IMR-90 (cell line): ENCODE measurements at regions of chr20 and their contacts with region 1.

Region 1: GRCh38 chr20:32652739-32653526 is 20.8 kb downstream of the C20orf203 start:
- DNase-seq: peak; percentile 66
- ATAC-seq: peak; percentile 99
- H3K4me3 ChIP-seq: no peak overlapping the region
- H3K27ac ChIP-seq: no peak overlapping the region
- H3K4me1 ChIP-seq: no peaks in the 10 kb centered on the region
- H3K27me3 ChIP-seq: peaks cover 5% of the 10 kb centered on the region
- CTCF ChIP-seq: peak; percentile 98
- POLR2A ChIP-seq: peak; percentile 46; the same call in 1 of the 2 replicates
- RAD21 ChIP-seq: peak; percentile 99

Region 2: DNA sequence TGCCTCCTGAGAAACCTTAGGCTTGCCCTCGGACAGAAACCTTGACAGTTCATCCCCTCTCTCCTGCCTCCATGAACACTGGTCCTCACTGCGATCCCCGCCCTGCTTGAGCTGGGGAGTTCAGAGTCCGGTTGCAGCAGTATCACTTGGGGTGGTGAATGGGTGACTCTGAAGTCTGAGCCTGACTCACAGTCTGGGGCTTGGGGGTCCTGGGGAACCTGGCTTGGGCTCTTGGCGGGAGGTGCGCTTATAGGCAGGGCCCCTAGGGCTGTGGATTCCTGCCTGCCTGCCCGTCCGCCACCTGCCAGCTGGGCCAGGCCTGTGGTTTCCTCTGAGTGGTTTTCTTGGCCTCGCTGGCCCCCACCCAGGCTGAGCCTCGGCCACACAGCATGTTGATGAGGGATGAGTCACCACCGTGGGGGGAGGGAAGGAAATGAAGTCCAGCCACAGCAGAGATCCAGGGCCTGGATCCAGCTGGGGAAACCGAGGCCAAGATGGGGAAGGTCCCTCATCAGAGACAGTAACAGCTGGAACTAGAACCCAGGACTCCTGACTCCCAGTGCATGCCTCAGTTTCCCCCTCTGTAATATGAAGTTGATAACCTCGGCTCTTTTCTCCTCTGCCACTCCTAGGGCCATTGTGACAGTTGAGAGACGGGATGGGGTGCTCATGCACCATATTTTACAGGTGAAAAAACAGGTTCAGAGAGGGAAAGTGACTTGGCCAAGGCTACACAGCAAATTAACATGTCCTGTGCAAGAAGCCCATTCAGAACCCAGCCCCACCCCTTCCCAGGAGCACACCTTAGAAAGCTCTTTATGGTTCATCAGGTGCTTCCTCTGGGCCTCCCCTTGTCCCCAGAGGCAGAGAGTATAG is 816.7 kb before region 1 on chr20:
- CTCF ChIA-PET with region 1: interaction called, 4 read pairs
- POLR2A ChIA-PET with region 1: no interaction called
- dilution Hi-C with region 1: no loop called
- in situ Hi-C with region 1: loop called (anchors 25 kb)
- intact Hi-C with region 1: no loop called
- DNase-seq: peak; percentile 92
- ATAC-seq: peak; percentile 88
- H3K4me3 ChIP-seq: no peak overlapping the region
- H3K27ac ChIP-seq: no peak overlapping the region
- H3K4me1 ChIP-seq: peaks cover 15% of the 10 kb centered on the region
- H3K27me3 ChIP-seq: peaks cover 3% of the 10 kb centered on the region; the same call in 1 of the 2 replicates
- CTCF ChIP-seq: no peak
- POLR2A ChIP-seq: no peak
- RAD21 ChIP-seq: no peak

Region 3: DNA sequence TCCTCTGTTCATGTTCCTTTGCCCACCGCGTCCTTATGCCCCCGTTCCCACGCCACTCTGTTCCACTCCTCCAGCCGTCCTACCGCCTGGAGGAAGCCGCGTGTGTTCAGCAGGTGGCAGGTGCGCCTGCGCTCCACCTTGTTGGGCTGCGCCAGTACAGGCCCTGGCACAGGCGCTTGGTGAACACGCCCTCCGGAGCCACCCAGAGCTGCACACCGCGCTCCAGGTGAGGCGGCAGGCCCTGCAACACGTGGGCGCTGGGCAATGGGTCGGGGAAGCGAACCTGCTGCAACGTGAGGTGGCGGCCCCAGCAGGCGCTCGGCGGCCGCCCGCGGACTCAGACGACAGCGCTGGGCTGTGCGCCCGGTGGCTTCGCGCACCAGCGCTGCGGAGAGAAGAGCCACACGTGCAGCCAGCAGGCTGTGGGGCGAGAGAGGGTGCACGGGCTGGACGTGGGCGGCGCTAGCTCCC is 803.4 kb before region 1 on chr20:
- CTCF ChIA-PET with region 1: no interaction called
- POLR2A ChIA-PET with region 1: no interaction called
- dilution Hi-C with region 1: no loop called
- in situ Hi-C with region 1: loop called (anchors 25 kb)
- intact Hi-C with region 1: loop called (anchors 5 kb)
- DNase-seq: no peak
- ATAC-seq: no peak
- H3K4me3 ChIP-seq: no peak overlapping the region
- H3K27ac ChIP-seq: no peak overlapping the region
- H3K4me1 ChIP-seq: no peaks in the 10 kb centered on the region
- H3K27me3 ChIP-seq: peaks cover 60% of the 10 kb centered on the region
- CTCF ChIP-seq: no peak
- POLR2A ChIP-seq: no peak
- RAD21 ChIP-seq: no peak

Region 4: DNA sequence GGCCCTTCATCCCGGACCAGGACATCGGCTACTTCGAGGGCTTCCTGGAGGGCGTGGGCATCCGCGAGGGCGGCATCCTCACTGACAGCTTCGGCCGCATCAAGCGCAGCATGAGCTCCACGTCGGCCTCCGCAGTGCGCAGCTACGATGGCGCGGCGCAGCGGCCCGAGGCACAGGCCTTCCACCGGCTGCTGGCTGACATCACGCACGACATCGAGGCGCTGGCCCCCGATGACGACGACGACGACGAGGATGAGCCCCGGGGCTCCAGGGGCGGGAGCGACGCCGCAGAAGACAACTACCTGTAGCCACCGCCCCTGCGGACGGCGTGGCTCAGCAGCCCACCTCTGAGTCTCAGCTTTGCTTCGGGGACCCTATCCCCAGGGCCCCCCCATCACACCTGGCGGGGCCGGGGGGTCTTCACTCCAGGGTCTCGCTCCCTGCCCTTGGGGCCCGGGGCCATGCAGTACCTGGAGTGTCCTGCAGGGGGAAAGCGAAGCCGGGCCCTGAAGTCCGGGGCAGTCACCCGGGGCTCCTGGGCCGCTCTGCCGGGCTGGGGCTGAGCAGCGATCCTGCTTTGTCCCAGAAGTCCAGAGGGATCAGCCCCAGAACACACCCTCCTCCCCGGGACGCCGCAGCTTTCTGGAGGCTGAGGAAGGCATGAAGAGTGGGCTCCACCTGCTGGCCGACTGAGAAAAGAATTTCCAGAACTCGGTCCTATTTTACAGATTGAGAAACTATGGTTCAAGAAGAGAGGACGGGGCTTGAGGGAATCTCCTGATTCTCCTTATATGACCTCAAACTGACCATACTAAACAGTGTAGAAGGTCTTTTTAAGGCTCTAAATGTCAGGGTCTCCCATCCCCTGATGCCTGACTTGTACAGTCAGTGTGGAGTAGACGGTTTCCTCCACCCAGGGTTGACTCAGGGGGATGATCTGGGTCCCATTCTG is 621.6 kb before region 1 on chr20:
- CTCF ChIA-PET with region 1: no interaction called
- POLR2A ChIA-PET with region 1: no interaction called
- dilution Hi-C with region 1: no loop called
- in situ Hi-C with region 1: no loop called
- intact Hi-C with region 1: loop called (anchors 1 kb)
- DNase-seq: peak; percentile 73
- ATAC-seq: peak; percentile 98
- H3K4me3 ChIP-seq: no peak overlapping the region
- H3K27ac ChIP-seq: no peak overlapping the region
- H3K4me1 ChIP-seq: no peaks in the 10 kb centered on the region
- H3K27me3 ChIP-seq: peaks cover 75% of the 10 kb centered on the region
- CTCF ChIP-seq: peak; percentile 73
- POLR2A ChIP-seq: no peak
- RAD21 ChIP-seq: peak; percentile 71

Region 5: GRCh38 chr20:32336918-32337347 is 316.0 kb before region 1 on chr20:
- CTCF ChIA-PET with region 1: no interaction called
- POLR2A ChIA-PET with region 1: no interaction called
- dilution Hi-C with region 1: no loop called
- in situ Hi-C with region 1: no loop called
- intact Hi-C with region 1: loop called (anchors 5 kb)
- DNase-seq: peak; percentile 54
- ATAC-seq: peak; percentile 91
- H3K4me3 ChIP-seq: no peak overlapping the region
- H3K27ac ChIP-seq: no peak overlapping the region
- H3K4me1 ChIP-seq: peaks cover 4% of the 10 kb centered on the region
- H3K27me3 ChIP-seq: no peaks in the 10 kb centered on the region
- CTCF ChIP-seq: peak; percentile 69
- POLR2A ChIP-seq: no peak
- RAD21 ChIP-seq: peak; percentile 72

Region 6: GRCh38 chr20:32516583-32517517 is 136.1 kb before region 1 on chr20:
- CTCF ChIA-PET with region 1: interaction called, 28 read pairs
- POLR2A ChIA-PET with region 1: no interaction called
- dilution Hi-C with region 1: no loop called
- in situ Hi-C with region 1: loop called (anchors 5 kb)
- intact Hi-C with region 1: loop called (anchors 1 kb)
- DNase-seq: peak; percentile 26
- ATAC-seq: peak; percentile 48
- H3K4me3 ChIP-seq: no peak overlapping the region
- H3K27ac ChIP-seq: no peak overlapping the region
- H3K4me1 ChIP-seq: peaks cover 9% of the 10 kb centered on the region; the same call in 1 of the 2 replicates
- H3K27me3 ChIP-seq: no peaks in the 10 kb centered on the region
- CTCF ChIP-seq: no peak
- POLR2A ChIP-seq: no peak
- RAD21 ChIP-seq: no peak

Region 7: GRCh38 chr20:32521780-32522525 is 131.0 kb before region 1 on chr20:
- CTCF ChIA-PET with region 1: interaction called, 28 read pairs
- POLR2A ChIA-PET with region 1: no interaction called
- dilution Hi-C with region 1: no loop called
- in situ Hi-C with region 1: loop called (anchors 5 kb)
- intact Hi-C with region 1: loop called (anchors 1 kb)
- DNase-seq: peak; percentile 49
- ATAC-seq: peak; percentile 94
- H3K4me3 ChIP-seq: no peak overlapping the region
- H3K27ac ChIP-seq: no peak overlapping the region
- H3K4me1 ChIP-seq: peaks cover 4% of the 10 kb centered on the region; the same call in 1 of the 2 replicates
- H3K27me3 ChIP-seq: peaks cover 4% of the 10 kb centered on the region; the same call in 1 of the 2 replicates
- CTCF ChIP-seq: peak; percentile 95
- POLR2A ChIP-seq: peak; percentile 58
- RAD21 ChIP-seq: peak; percentile 100

Region 8: DNA sequence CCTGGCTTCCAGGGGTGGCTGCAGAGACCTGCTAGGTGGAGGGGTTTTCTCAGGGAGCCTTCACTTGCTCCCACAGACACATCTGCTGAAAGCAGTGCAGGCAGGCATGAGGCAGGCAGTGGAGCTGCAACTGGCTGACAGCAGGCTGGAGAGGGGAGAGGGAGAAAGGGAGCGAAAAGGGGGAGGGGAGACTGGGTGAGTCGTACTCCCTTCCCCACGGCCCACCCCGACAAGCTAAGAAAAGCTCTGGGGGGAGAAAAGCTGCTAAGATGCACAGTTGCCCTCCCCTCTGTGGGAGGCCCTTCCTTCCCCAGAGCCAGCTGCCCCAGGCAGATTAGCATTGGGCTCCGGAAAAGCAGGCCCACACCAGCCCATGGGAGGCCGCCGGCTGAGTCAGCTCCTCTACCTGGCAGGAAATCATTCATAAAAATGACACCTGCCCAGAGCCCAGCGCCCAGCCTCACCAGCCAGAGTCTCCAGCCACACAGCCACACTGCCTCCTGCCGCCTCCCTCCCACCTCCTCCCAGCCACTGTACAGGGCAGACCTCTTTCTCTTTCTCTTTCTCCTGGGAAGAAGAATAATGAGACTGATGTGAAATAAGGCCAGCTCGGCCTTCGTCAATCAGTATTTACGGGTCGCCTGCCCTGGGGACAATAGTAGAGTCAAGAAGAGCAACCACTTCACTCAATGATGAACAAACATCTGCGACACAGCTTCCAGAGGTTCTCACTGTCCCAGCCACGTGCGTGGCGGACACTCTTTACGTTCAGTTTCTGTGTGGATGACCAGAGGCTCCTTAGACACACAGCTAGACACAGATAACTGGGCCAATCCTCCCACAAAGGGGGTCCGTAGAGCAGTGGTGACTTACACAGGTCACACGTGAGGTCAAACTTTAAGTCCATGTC is 28.5 kb after region 1 on chr20:
- CTCF ChIA-PET with region 1: no interaction called
- POLR2A ChIA-PET with region 1: no interaction called
- dilution Hi-C with region 1: no loop called
- in situ Hi-C with region 1: no loop called
- intact Hi-C with region 1: no loop called
- DNase-seq: peak; percentile 17
- ATAC-seq: peak; percentile 55; the same call in 1 of the 2 replicates
- H3K4me3 ChIP-seq: no peak overlapping the region
- H3K27ac ChIP-seq: no peak overlapping the region
- H3K4me1 ChIP-seq: peaks cover 7% of the 10 kb centered on the region
- H3K27me3 ChIP-seq: no peaks in the 10 kb centered on the region
- CTCF ChIP-seq: no peak
- POLR2A ChIP-seq: no peak
- RAD21 ChIP-seq: no peak

Region 9: DNA sequence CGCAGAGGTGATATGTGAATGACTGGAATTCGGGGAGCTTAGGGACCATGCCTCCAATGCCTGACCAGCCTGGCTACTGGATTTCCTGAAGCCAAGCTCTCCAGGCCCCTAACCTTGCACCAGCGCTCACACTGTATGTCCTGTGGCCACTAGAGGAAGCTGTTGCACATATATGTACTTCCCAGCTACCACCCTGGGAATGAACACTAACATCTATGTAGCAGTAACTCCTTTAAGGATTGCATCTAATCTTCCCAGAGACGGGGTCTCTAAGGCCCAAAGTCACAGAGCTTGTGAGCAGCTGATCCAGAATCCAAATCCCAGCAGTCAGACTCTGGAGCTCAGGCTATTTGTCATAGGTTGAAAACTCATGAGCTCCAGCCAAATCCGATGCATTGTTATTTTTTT is 609.7 kb after region 1 on chr20:
- CTCF ChIA-PET with region 1: no interaction called
- POLR2A ChIA-PET with region 1: no interaction called
- dilution Hi-C with region 1: no loop called
- in situ Hi-C with region 1: no loop called
- intact Hi-C with region 1: no loop called
- DNase-seq: peak; percentile 53
- ATAC-seq: peak; percentile 93
- H3K4me3 ChIP-seq: no peak overlapping the region
- H3K27ac ChIP-seq: no peak overlapping the region
- H3K4me1 ChIP-seq: no peaks in the 10 kb centered on the region
- H3K27me3 ChIP-seq: peaks cover 3% of the 10 kb centered on the region; the same call in 1 of the 2 replicates
- CTCF ChIP-seq: peak; percentile 59
- POLR2A ChIP-seq: no peak
- RAD21 ChIP-seq: peak; percentile 46